Activated naive CD4-positive, alpha-beta T cell treated with anti-CD3 and anti-CD28 coated beads for 36 hours (primary cell): ENCODE measurements at regions of chr4 and their contacts with region 1.

Region 1: GRCh38 chr4:154551872-154552686 is 1.9 kb upstream of the PLRG1 start:
- DNase-seq: peak; percentile 83
- H3K4me3 Mint-ChIP-seq: no peak overlapping the region
- H3K27ac Mint-ChIP-seq: no peak overlapping the region
- H3K4me1 Mint-ChIP-seq: peaks cover 18% of the 10 kb centered on the region
- H3K27me3 Mint-ChIP-seq: no peaks in the 10 kb centered on the region

Region 2: GRCh38 chr4:154332681-154333421 is 219.2 kb before region 1 on chr4:
- CTCF ChIA-PET with region 1: interaction called, 3 read pairs
- intact Hi-C with region 1: loop called (anchors 1 kb)
- DNase-seq: peak; percentile 85
- H3K4me3 Mint-ChIP-seq: peak overlapping the region; percentile 69
- H3K27ac Mint-ChIP-seq: no peak overlapping the region
- H3K4me1 Mint-ChIP-seq: peaks cover 9% of the 10 kb centered on the region
- H3K27me3 Mint-ChIP-seq: peaks cover 14% of the 10 kb centered on the region

Region 3: GRCh38 chr4:154618708-154619315 is 66.7 kb after region 1 on chr4:
- CTCF ChIA-PET with region 1: interaction called, 190 read pairs
- intact Hi-C with region 1: loop called (anchors 1 kb)
- DNase-seq: peak; percentile 77
- H3K4me3 Mint-ChIP-seq: no peak overlapping the region
- H3K27ac Mint-ChIP-seq: no peak overlapping the region
- H3K4me1 Mint-ChIP-seq: peaks cover 10% of the 10 kb centered on the region
- H3K27me3 Mint-ChIP-seq: peaks cover under 1% of the 10 kb centered on the region

Region 4: DNA sequence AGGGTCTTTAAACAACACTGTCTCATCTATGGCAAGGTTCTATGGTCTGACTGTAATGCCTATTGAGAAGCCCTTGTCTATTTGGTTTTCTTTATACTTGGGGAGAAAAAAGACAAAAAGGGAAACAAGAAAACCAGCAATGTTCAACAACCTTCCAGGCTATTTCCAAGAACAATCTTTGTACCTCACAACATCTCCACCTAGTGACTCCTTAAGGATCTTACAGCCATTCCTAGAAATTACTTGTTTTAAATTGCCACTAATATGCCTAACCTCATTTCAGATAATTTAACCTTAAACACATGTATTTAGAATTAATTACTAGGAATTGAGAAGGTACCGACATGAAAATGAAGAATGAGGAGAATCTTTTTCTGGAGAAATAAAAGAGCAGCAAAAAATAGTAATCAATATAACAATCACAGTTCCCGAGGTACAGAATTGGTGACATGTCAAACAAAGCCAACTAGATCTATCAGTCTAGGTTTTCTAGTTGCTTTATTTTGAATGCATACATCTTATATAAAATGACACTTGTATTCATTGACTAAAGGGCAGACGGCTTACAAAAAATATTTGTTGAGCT is 227.4 kb after region 1 on chr4:
- CTCF ChIA-PET with region 1: interaction called, 3 read pairs
- intact Hi-C with region 1: loop called (anchors 2 kb)
- DNase-seq: no peak
- H3K4me3 Mint-ChIP-seq: no peak overlapping the region
- H3K27ac Mint-ChIP-seq: no peak overlapping the region
- H3K4me1 Mint-ChIP-seq: no peaks in the 10 kb centered on the region
- H3K27me3 Mint-ChIP-seq: peaks cover 26% of the 10 kb centered on the region

Region 5: DNA sequence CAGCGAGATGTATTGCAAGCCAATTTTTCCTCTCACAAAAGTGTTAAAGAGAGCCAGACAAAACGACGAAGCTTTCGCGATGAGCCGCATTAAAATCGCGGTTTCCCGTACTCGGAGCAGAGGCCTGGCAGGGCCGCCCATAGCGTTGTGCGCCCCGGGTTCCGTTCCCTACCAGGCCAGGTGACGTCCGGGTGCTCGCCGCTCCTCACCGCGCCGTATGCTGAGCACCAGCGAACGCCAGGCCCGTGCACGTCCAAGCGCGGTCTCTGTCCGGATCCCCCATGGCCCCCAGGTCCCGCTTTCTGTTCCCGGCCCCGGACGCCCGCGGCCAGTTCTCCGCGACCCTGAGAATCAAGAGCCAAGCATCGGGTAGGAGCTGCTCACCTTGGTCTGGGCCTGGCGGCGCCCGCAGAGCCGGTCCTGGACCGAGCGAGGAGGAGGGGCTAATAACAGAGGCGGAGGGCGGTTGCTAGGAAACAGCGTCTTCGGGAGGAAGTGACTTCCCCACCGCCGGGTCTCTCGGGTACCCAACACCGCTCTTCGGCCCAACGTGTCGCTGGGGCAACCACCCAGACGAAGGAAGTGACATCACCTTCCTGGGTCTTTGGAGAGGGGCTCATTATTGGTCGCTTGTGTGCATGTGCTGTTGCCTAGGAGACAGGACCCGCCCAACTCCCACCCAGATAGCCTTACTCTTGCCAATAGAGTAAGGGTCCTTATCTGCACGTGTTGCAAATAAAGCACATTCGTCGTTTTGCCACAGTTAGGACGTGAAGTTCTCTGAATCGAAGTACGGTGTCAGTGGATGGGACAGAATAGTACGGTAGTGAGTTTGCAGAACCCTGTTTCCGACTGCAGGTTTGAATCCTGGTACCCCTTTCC is 824.5 kb after region 1 on chr4 and contains the start of gene MAP9:
- CTCF ChIA-PET with region 1: interaction called, 3 read pairs
- intact Hi-C with region 1: loop called (anchors 1 kb)
- DNase-seq: peak; percentile 91
- H3K4me3 Mint-ChIP-seq: peak within 1 kb of the TSS; percentile 81
- H3K27ac Mint-ChIP-seq: peak within 1 kb of the TSS; percentile 78
- H3K4me1 Mint-ChIP-seq: peaks cover 11% of the 10 kb centered on the region
- H3K27me3 Mint-ChIP-seq: no peaks in the 10 kb centered on the region
- total RNA-seq, gene MAP9: 5.3 to 6.2 TPM

Region 6: GRCh38 chr4:155953151-155954114 is 1401.4 kb after region 1 on chr4 and contains the start of gene CTSO:
- CTCF ChIA-PET with region 1: no interaction called
- intact Hi-C with region 1: loop called (anchors 1 kb)
- DNase-seq: peak; percentile 78
- H3K4me3 Mint-ChIP-seq: peak within 1 kb of the TSS; percentile 95
- H3K27ac Mint-ChIP-seq: peak within 1 kb of the TSS; percentile 98
- H3K4me1 Mint-ChIP-seq: peaks cover 18% of the 10 kb centered on the region
- H3K27me3 Mint-ChIP-seq: peaks cover 4% of the 10 kb centered on the region
- total RNA-seq, gene CTSO: 2.1 to 2.6 TPM